GM12878 (cell line): ENCODE measurements at regions of chr11 and their contacts with region 1.

Region 1: GRCh38 chr11:110349138-110349996 is 53.0 kb upstream of the RDX start:
- DNase-seq: peak; percentile 94
- ATAC-seq: peak; percentile 86
- H3K4me3 ChIP-seq: peak overlapping the region; percentile 38; the same call in 1 of the 2 replicates
- H3K27ac ChIP-seq: peak overlapping the region; percentile 96
- H3K4me1 ChIP-seq: peaks cover 43% of the 10 kb centered on the region
- H3K27me3 ChIP-seq: no peaks in the 10 kb centered on the region
- CTCF ChIP-seq: peak in 1 of 3 experiments; percentile 33; a peak in 2 of 6 replicates
- EP300 ChIP-seq: peak; percentile 94 to 99
- POLR2A ChIP-seq: peak; percentile 30; the same call in 1 of the 2 replicates
- RAD21 ChIP-seq: peak; percentile 51

Region 2: DNA sequence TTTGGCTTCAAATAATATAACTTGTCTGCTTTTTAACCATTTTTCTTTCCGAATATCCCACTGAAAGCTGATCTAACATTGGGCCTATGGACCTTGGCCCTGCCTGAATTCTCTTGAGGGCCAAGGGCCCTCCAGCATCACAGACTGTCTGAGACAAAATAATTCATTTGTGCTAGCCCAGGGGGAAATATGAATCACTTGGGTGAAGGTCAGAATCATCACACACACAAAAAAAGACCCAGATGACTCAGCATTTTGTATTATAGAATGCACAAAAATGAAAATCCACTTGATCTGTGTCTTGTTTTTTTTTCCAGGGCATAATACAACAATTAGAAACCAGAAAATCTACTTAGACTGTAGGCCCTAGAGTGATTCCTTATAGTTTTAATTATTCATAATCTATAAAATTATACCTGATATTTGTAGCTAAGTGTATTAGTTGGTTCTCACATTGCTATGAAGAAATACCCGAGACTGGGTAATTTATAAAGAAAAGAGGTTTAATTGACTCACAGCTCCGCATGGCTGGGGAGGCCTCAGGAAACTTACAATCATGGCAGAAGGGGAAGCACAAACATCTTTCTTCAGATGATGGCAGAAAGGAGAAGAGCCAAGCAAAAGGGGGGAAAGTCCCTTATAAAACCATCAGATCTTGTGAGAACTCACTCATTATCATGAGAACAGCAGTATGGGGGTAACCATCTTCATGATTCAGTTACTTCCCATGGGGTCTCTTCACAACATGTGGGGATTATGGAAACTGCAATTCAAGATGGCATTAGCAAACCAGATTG is 37.4 kb before region 1 on chr11:
- CTCF ChIA-PET with region 1: no interaction called
- POLR2A ChIA-PET with region 1: interaction called, 5 read pairs
- RAD21 ChIA-PET with region 1: interaction called, 6 read pairs
- SMC1A ChIA-PET with region 1: interaction called, 7 read pairs
- in situ Hi-C with region 1: no loop called
- intact Hi-C with region 1: loop called (anchors 5 kb)
- DNase-seq: no peak
- ATAC-seq: peak; percentile 93
- H3K4me3 ChIP-seq: no peak overlapping the region
- H3K27ac ChIP-seq: peak overlapping the region; percentile 33; the same call in 1 of the 2 replicates
- H3K4me1 ChIP-seq: peaks cover 3% of the 10 kb centered on the region; the same call in 1 of the 2 replicates
- H3K27me3 ChIP-seq: no peaks in the 10 kb centered on the region
- CTCF ChIP-seq: no peak
- EP300 ChIP-seq: no peak
- POLR2A ChIP-seq: no peak
- RAD21 ChIP-seq: no peak

Region 3: GRCh38 chr11:110327508-110327907 is 21.9 kb before region 1 on chr11:
- CTCF ChIA-PET with region 1: interaction called, 12 read pairs
- POLR2A ChIA-PET with region 1: interaction called, 9 read pairs
- RAD21 ChIA-PET with region 1: interaction called, 26 read pairs
- SMC1A ChIA-PET with region 1: interaction called, 26 read pairs
- in situ Hi-C with region 1: no loop called
- intact Hi-C with region 1: loop called (anchors 1 kb)
- DNase-seq: no peak
- ATAC-seq: peak; percentile 41
- H3K4me3 ChIP-seq: peak overlapping the region; percentile 64
- H3K27ac ChIP-seq: peak overlapping the region; percentile 28; the same call in 1 of the 2 replicates
- H3K4me1 ChIP-seq: peaks cover 8% of the 10 kb centered on the region; the same call in 1 of the 2 replicates
- H3K27me3 ChIP-seq: no peaks in the 10 kb centered on the region
- CTCF ChIP-seq: no peak
- EP300 ChIP-seq: no peak
- POLR2A ChIP-seq: no peak
- RAD21 ChIP-seq: no peak

Region 4: GRCh38 chr11:110337570-110338193 is 11.7 kb before region 1 on chr11:
- CTCF ChIA-PET with region 1: interaction called, 18 read pairs
- POLR2A ChIA-PET with region 1: interaction called, 16 read pairs
- RAD21 ChIA-PET with region 1: interaction called, 26 read pairs
- SMC1A ChIA-PET with region 1: interaction called, 37 read pairs
- in situ Hi-C with region 1: no loop called
- intact Hi-C with region 1: no loop called
- DNase-seq: no peak
- ATAC-seq: peak; percentile 64
- H3K4me3 ChIP-seq: no peak overlapping the region
- H3K27ac ChIP-seq: peak overlapping the region; percentile 24; the same call in 1 of the 2 replicates
- H3K4me1 ChIP-seq: peaks cover 7% of the 10 kb centered on the region; the same call in 1 of the 2 replicates
- H3K27me3 ChIP-seq: no peaks in the 10 kb centered on the region
- CTCF ChIP-seq: no peak
- EP300 ChIP-seq: no peak
- POLR2A ChIP-seq: no peak
- RAD21 ChIP-seq: no peak

Region 5: GRCh38 chr11:110392056-110392455 is 42.7 kb after region 1 on chr11:
- CTCF ChIA-PET with region 1: no interaction called
- POLR2A ChIA-PET with region 1: no interaction called
- RAD21 ChIA-PET with region 1: no interaction called
- SMC1A ChIA-PET with region 1: no interaction called
- in situ Hi-C with region 1: no loop called
- intact Hi-C with region 1: no loop called
- DNase-seq: no peak
- ATAC-seq: no peak
- H3K4me3 ChIP-seq: no peak overlapping the region
- H3K27ac ChIP-seq: no peak overlapping the region
- H3K4me1 ChIP-seq: no peaks in the 10 kb centered on the region
- H3K27me3 ChIP-seq: no peaks in the 10 kb centered on the region
- CTCF ChIP-seq: no peak
- EP300 ChIP-seq: no peak
- POLR2A ChIP-seq: no peak
- RAD21 ChIP-seq: no peak